ENCODE measurements at regions of chr16 and their contacts with region 1.

Region 1: GRCh38 chr16:3637371-3637923 is 17.0 kb upstream of the DNASE1 start:
- DNase-seq: peak; percentile 68
- ATAC-seq: peak; percentile 73
- H3K4me3 Mint-ChIP-seq: no peak overlapping the region
- H3K27ac Mint-ChIP-seq: peak overlapping the region; percentile 91
- H3K4me1 Mint-ChIP-seq: peaks cover 27% of the 10 kb centered on the region
- H3K27me3 Mint-ChIP-seq: no peaks in the 10 kb centered on the region
- CTCF ChIP-seq: no peak

Region 2: DNA sequence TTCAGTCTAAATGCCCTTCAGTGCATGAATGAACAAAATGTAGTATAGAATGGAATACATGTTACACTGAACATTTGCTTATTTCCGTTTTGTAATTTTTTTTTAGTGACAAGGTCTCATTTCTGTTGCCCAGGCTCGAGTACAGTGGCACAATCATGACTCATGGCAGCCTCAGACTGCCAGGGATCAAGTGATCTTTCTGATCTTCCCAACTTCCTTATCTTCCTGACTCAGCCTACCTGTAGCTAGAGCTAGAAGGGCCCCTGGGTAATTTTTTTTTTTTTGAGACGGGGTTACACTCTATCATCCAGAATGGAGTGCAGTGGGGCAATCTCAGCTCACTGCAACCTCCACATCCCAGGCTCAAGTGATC is 18.7 kb before region 1 on chr16:
- CTCF ChIA-PET with region 1: no interaction called
- POLR2A ChIA-PET with region 1: no interaction called
- intact Hi-C with region 1: no loop called
- DNase-seq: no peak
- ATAC-seq: no peak
- H3K4me3 Mint-ChIP-seq: no peak overlapping the region
- H3K27ac Mint-ChIP-seq: peak overlapping the region; percentile 39
- H3K4me1 Mint-ChIP-seq: peaks cover 47% of the 10 kb centered on the region
- H3K27me3 Mint-ChIP-seq: no peaks in the 10 kb centered on the region
- CTCF ChIP-seq: no peak

Region 3: DNA sequence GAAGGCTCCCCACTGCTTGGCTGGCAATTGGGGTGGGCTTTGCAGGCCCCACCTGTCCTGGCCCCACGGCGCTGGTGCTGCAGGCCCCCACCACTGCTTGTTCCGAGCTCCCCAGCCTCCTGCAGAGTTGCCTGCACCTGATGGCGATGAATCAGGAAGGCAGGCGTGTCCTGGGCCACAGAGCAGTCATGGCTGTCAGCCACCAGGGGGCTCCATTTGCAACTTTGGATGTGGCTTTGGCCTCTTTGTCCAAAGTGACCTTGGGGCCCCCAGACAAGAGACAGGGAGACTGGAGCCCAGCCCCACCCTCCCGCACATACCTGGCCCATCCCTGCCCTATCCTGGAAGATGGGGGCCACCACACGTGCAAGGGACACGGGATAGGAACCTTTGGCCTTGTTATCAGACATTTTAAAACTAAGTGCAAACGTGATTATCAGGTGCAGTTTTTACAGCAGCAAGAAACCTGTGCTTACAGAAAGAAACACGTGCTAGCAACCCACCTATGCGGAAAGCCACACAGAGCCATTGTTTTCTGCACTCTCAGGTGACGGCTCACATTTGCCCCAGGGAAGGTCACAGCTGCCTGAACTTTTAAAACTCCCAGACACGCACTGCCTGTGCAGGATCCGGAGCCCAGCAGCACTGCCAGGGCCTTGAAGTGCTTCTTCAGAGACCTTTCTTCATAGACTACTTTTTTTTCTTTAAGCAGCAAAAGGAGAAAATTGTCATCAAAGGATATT is 17.0 kb after region 1 on chr16 and contains the start of gene DNASE1:
- CTCF ChIA-PET with region 1: interaction called, 13 read pairs
- POLR2A ChIA-PET with region 1: interaction called, 3 read pairs
- intact Hi-C with region 1: no loop called
- DNase-seq: peak; percentile 78
- ATAC-seq: peak; percentile 68
- H3K4me3 Mint-ChIP-seq: no peak within 1 kb of the TSS
- H3K27ac Mint-ChIP-seq: peak within 1 kb of the TSS; percentile 42
- H3K4me1 Mint-ChIP-seq: peaks cover 15% of the 10 kb centered on the region
- H3K27me3 Mint-ChIP-seq: no peaks in the 10 kb centered on the region
- CTCF ChIP-seq: peak; percentile 77
- total RNA-seq, gene DNASE1: 11.8 to 12.1 TPM

Region 4: GRCh38 chr16:3671424-3671823 is 34.0 kb after region 1 on chr16:
- CTCF ChIA-PET with region 1: no interaction called
- POLR2A ChIA-PET with region 1: no interaction called
- intact Hi-C with region 1: no loop called
- DNase-seq: no peak
- ATAC-seq: no peak
- H3K4me3 Mint-ChIP-seq: no peak overlapping the region
- H3K27ac Mint-ChIP-seq: no peak overlapping the region
- H3K4me1 Mint-ChIP-seq: peaks cover 4% of the 10 kb centered on the region
- H3K27me3 Mint-ChIP-seq: no peaks in the 10 kb centered on the region
- CTCF ChIP-seq: no peak

Region 5: DNA sequence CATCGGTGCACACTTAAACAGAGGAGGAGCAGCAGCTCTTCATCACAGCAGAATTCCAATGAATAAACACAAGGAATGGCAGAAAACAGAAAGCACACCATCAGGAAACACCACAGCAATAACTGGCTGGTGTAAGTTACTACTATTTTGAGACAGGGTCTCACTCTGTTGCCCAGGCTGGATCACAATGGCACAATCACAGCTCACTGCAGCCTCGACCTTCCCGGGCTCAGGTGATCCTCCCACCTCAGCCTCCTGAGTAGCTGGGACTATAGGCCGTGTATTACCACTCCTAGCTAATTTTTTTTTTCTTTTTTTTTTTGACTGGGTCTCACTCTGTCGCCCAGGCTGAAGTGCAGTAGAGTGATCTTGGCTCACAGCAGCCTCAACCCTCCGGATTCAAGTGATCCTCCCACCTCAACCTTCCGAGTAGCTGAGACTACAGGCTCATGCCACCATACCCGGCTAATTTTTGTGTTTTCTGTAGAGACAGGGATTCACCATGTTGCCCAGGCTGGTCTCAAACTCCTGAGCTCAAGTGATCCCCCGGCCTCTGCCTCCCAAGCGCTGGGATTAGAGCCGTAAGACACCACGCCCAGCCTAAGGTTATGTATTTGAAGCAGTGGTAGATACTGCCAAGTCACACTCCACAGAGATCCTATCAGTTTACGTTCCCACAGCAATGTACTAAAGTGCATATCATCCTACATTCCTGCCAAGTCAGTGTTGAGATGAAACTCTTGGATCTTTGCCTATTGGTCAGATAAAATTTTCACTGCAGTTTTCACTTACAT is 59.2 kb after region 1 on chr16:
- CTCF ChIA-PET with region 1: no interaction called
- POLR2A ChIA-PET with region 1: no interaction called
- intact Hi-C with region 1: no loop called
- DNase-seq: no peak
- ATAC-seq: no peak
- H3K4me3 Mint-ChIP-seq: no peak overlapping the region
- H3K27ac Mint-ChIP-seq: no peak overlapping the region
- H3K4me1 Mint-ChIP-seq: peaks cover 20% of the 10 kb centered on the region
- H3K27me3 Mint-ChIP-seq: no peaks in the 10 kb centered on the region
- CTCF ChIP-seq: no peak

Region 6: DNA sequence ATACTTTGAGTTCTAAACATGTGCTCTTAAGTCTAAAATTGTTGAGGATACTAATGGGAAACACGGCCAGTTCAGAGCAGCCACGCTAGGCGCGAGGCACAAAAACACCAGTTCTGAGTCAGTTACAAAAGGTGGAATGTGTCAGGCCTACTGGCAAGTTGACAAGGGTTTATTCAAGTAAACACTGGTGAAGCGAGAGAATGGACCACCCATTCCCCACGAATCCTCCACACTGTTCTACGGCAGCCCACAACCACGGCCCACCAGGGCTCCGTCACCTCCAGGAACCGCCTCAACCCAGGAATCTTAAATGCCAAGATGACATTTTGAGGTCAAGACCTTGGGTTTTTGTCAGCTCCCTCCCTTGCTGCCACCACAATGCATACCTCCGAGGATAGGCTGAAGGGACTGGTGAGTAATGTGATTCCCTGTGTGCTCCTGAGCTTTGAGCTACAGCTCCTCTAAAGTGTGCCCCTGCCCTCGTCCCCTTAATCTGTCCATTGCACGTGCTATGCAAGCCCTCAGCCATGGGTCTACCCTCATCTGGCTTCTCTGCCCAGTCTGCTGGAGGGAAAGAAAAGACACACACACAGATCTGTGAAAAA is 108.4 kb after region 1 on chr16:
- CTCF ChIA-PET with region 1: no interaction called
- POLR2A ChIA-PET with region 1: no interaction called
- intact Hi-C with region 1: no loop called
- DNase-seq: no peak
- ATAC-seq: no peak
- H3K4me3 Mint-ChIP-seq: no peak overlapping the region
- H3K27ac Mint-ChIP-seq: peak overlapping the region; percentile 24
- H3K4me1 Mint-ChIP-seq: peaks cover 7% of the 10 kb centered on the region
- H3K27me3 Mint-ChIP-seq: no peaks in the 10 kb centered on the region
- CTCF ChIP-seq: no peak